Colonic mucosa (tissue), 4 donors: ENCODE measurements at regions of chr4 and their contacts with region 1.

Region 1: DNA sequence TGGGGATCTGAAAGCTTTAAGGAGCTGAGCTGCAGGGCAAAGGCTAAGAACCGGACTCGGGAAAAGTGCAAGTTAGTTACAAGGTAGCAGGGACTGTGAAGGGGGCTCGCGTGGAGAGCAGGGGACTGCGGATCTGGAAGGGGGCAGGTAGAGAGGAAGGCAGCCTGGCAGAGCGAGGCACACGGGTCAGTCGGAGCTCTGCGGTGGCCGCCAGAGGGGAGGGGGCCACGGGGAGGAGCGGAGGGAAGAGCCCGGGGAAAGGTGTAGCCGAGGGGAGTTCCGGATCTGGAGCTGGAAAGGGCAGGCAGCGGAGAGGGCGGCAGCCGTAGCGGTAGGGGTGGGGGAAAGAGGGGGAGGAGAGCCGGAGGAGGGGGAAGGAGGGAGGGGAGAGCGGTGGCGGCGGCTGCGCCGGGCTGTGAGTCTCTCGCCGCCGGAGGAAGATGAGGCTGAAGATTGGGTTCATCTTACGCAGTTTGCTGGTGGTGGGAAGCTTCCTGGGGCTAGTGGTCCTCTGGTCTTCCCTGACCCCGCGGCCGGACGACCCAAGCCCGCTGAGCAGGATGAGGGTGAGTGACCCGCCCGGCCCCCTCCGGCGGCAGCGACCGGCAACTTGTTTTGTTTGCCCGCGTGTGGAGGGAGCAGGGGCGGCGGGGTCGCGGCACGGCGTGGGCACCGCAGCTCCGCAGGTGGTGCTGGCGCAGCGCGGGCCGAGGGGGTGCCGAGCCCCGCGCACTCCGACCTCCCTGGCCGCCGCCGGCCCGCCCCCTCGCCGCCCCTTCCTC is at the start of gene GALNT7:
- DNase-seq: peak; percentile 85
- H3K4me3 ChIP-seq: peak within 1 kb of the TSS; percentile 88
- H3K27ac ChIP-seq: peak within 1 kb of the TSS; percentile 94
- H3K4me1 ChIP-seq: peaks cover 10% of the 10 kb centered on the region
- H3K27me3 ChIP-seq: no peaks in the 10 kb centered on the region
- CTCF ChIP-seq: no peak
- total RNA-seq, gene GALNT7: 83.5 to 138 TPM

Region 2: DNA sequence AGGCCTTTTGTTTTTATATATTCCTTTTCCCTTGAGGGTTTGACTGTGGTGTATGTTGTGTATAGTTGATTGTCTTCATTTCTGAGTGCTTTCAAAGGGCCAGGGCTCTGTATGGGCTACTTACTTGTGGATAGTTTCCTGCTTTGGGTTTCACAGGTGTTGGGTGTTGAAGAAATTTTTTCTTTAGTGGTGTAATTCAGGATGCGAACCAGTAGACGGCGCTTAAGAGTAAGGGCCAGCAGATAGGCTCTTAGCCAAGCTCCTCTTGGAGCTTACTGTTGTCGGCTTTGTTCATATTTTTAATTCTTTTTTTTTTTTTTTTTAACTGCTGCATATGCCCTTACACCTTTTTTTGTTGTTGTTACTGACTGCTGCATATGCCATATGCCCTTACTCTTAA is 276.3 kb before region 1 on chr4:
- intact Hi-C with region 1: no loop called
- DNase-seq: peak; percentile 27
- H3K4me3 ChIP-seq: no peak overlapping the region
- H3K27ac ChIP-seq: no peak overlapping the region
- H3K4me1 ChIP-seq: no peaks in the 10 kb centered on the region
- H3K27me3 ChIP-seq: no peaks in the 10 kb centered on the region
- CTCF ChIP-seq: peak; percentile 38

Region 3: GRCh38 chr4:173025131-173025530 is 143.5 kb before region 1 on chr4:
- intact Hi-C with region 1: loop called (anchors 5 kb)
- DNase-seq: peak; percentile 71
- H3K4me3 ChIP-seq: no peak overlapping the region
- H3K27ac ChIP-seq: no peak overlapping the region
- H3K4me1 ChIP-seq: no peaks in the 10 kb centered on the region
- H3K27me3 ChIP-seq: no peaks in the 10 kb centered on the region
- CTCF ChIP-seq: peak; percentile 65

Region 4: GRCh38 chr4:173231916-173232315 is 63.3 kb after region 1 on chr4:
- intact Hi-C with region 1: loop called (anchors 10 kb)
- DNase-seq: no peak
- H3K4me3 ChIP-seq: no peak overlapping the region
- H3K27ac ChIP-seq: no peak overlapping the region
- H3K4me1 ChIP-seq: no peaks in the 10 kb centered on the region
- H3K27me3 ChIP-seq: no peaks in the 10 kb centered on the region
- CTCF ChIP-seq: no peak